ENCODE measurements at regions of chr17 and their contacts with region 1.

Region 1: GRCh38 chr17:79026345-79027273 is 2.6 kb downstream of the C1QTNF1 start:
- DNase-seq: no peak
- ATAC-seq: no peak
- H3K4me3 ChIP-seq: no peak overlapping the region
- H3K27ac ChIP-seq: no peak overlapping the region
- H3K4me1 ChIP-seq: peaks cover 21% of the 10 kb centered on the region
- H3K27me3 ChIP-seq: peaks cover 28% of the 10 kb centered on the region
- CTCF ChIP-seq: no peak

Region 2: DNA sequence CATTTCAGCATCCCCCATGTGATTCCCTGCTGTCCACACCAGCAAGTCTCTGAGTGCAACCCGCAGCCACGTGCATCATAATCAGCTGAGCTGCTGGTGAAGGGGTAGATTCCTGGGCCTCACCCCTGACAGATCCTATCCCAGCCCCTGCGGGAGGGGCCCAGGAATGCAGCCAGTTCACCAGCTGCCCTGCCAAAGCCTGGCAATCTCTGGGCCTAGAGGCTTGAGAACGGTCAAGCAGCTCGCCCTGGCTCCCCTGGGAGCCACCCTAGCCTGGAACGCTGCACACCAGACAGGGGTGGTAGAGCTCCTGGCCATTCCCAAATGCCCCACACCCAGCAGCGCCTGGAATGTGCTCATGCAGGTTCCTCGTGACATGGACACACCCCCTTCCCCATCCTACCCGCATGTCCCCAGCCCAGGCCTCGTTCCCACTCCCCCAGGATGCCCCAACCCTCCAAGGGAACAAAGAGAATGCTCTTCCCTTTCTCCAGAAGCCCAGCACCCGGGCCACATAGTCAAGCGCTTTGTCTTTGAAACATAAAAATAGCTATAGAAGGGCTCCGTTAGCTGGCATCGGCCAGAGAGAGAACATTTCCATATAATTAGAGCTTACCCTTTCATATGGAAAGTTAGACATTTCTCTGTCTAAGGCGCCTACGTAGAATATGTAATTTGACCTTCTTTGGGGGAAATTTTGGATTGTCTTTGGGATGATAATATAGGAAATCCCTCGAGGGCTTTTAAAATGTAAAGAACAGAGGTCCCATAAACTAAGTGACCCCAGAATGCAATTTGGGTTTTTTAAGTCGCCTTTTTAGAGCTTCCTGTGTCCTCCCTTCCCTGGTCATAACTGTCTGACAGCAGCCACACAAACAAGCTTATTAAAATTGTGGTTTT is 127.0 kb before region 1 on chr17:
- CTCF ChIA-PET with region 1: no interaction called
- POLR2A ChIA-PET with region 1: no interaction called
- in situ Hi-C with region 1: no loop called
- intact Hi-C with region 1: no loop called
- DNase-seq: no peak
- ATAC-seq: no peak
- H3K4me3 ChIP-seq: no peak overlapping the region
- H3K27ac ChIP-seq: no peak overlapping the region
- H3K4me1 ChIP-seq: no peaks in the 10 kb centered on the region; the same call in 1 of the 2 replicates
- H3K27me3 ChIP-seq: no peaks in the 10 kb centered on the region
- CTCF ChIP-seq: no peak

Region 3: GRCh38 chr17:79051306-79051705 is 24.7 kb after region 1 on chr17:
- CTCF ChIA-PET with region 1: no interaction called
- POLR2A ChIA-PET with region 1: no interaction called
- in situ Hi-C with region 1: no loop called
- intact Hi-C with region 1: no loop called
- DNase-seq: no peak
- ATAC-seq: no peak
- H3K4me3 ChIP-seq: no peak overlapping the region
- H3K27ac ChIP-seq: no peak overlapping the region
- H3K4me1 ChIP-seq: no peaks in the 10 kb centered on the region
- H3K27me3 ChIP-seq: no peaks in the 10 kb centered on the region
- CTCF ChIP-seq: no peak

Region 4: DNA sequence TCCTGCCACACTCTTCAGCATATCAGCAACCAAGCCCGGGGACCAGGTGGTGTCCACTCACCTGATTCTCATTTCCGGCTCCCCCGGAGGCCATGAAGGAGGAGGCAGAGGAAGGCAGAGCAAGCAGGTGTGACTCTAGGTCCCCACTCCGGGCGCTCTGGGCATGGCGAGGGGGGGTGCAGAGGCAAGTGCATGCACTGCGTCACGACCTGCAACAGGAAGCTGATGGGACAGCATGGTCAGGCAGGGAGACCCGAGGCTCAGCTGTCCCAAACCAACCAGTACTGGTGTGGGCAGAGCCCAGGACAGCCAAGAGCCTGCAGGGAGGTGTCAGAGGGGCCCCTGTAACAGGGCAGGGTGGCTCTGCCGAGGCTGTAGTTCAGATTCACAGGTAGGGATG is 45.9 kb after region 1 on chr17:
- CTCF ChIA-PET with region 1: interaction called, 12 read pairs
- POLR2A ChIA-PET with region 1: no interaction called
- in situ Hi-C with region 1: no loop called
- intact Hi-C with region 1: no loop called
- DNase-seq: no peak
- ATAC-seq: no peak
- H3K4me3 ChIP-seq: no peak overlapping the region
- H3K27ac ChIP-seq: no peak overlapping the region
- H3K4me1 ChIP-seq: peaks cover 5% of the 10 kb centered on the region; the same call in 1 of the 2 replicates
- H3K27me3 ChIP-seq: no peaks in the 10 kb centered on the region
- CTCF ChIP-seq: no peak

Region 5: DNA sequence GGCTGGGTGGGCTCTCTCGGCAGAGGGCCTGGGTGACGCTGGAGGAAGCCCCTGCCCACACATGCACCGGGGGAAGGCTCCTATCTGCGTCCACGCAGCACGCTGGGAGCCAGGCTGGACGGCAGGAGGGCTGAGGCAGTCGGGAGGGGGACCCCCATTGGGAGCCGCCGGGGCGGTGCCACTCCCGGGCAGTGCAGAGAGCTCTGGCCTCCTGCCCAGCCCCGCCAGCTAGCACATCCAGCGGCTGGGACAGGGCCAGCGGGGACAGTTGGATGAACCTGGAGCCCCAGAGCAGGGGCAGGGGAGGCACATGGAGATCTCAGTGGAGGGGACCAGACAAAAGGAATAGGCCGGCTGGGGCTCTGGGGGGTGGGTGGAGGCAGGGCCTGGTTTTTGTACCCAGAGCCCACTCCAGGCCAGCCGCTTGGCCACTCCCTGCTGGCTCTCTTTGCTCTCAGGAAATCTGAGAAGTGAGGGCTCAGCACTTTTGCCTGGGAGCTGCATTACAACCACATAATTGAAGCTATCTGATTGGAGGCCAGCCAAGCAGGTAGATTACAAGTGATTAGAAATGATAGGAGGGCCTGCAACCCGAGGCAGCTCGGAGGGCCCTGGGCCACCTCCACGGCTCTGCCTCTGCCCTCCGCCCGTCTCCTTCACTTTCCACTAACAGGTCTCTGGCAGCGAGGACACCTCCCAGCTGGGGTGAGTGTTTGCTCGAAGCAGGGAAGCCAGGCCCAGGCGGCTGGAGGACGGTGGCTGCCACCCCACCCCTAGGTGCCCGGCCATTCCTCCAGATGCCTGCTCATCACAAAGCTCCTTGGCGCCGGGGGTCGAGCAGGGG is 88.1 kb after region 1 on chr17:
- CTCF ChIA-PET with region 1: no interaction called
- POLR2A ChIA-PET with region 1: no interaction called
- in situ Hi-C with region 1: no loop called
- intact Hi-C with region 1: no loop called
- DNase-seq: no peak
- ATAC-seq: peak; percentile 33; the same call in 1 of the 2 replicates
- H3K4me3 ChIP-seq: no peak overlapping the region
- H3K27ac ChIP-seq: no peak overlapping the region
- H3K4me1 ChIP-seq: no peaks in the 10 kb centered on the region
- H3K27me3 ChIP-seq: peaks cover 5% of the 10 kb centered on the region
- CTCF ChIP-seq: no peak